ENCODE measurements at regions of chr15 and their contacts with region 1.

Region 1: DNA sequence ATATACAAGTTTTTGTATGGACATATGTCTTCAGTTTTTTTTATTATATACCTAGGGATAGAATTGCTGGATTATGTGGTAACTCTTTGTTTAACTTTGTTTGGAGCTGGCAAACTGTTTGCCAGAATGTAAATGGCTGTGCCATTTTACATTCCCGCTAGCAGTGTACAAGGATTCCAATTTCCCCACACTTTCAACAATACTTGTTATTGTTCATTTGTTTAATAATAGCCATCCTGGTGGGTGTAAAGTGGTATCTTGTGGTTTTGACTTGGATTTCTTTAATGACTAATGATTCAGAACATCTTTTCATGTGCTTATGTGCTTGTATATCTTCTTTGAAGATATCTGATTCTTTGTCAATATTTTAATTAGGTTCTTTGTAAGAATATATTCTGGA is 64.4 kb downstream of the ZNF609 start:
- DNase-seq: no peak
- H3K4me3 ChIP-seq: no peak overlapping the region
- H3K4me3 Mint-ChIP-seq: no peak overlapping the region
- H3K27ac ChIP-seq: no peak overlapping the region
- H3K27ac Mint-ChIP-seq: no peak overlapping the region
- H3K4me1 ChIP-seq: peaks cover 19% of the 10 kb centered on the region
- H3K4me1 Mint-ChIP-seq: peaks cover 49 to 86% (median 66%) of the 10 kb centered on the region in 3 donors
- H3K27me3 ChIP-seq: no peaks in the 10 kb centered on the region
- H3K27me3 Mint-ChIP-seq: no peaks in the 10 kb centered on the region

Region 2: DNA sequence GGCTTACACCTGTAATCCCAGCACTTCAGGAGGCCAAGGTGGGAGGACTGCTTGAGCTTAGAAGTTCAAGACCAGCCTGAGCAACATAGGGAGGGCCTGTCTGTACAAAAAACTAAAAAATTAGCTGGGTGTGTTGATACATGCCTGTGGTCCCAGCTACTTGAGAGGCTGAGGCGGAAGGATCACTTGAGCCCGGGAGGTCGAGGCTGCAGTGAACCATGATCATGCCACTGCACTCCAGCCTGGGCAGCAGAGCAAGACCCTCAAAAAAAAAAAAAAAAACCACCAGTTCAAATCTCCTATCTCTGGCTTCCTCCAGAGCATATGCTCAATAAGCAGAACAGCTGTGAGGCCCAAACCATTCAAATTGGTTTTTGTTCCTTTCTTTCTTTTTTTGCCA is 11.0 kb before region 1 on chr15:
- CTCF ChIA-PET with region 1: no interaction called
- POLR2A ChIA-PET with region 1: interaction called, 10 read pairs
- DNase-seq: no peak
- H3K4me3 ChIP-seq: no peak overlapping the region
- H3K4me3 Mint-ChIP-seq: peak overlapping the region in 1 of 7 donors; percentile 5
- H3K27ac ChIP-seq: no peak overlapping the region
- H3K27ac Mint-ChIP-seq: peak overlapping the region in 6 of 8 donors; percentile 38 to 76 (median 56)
- H3K4me1 ChIP-seq: peaks cover 52% of the 10 kb centered on the region
- H3K4me1 Mint-ChIP-seq: peaks cover 35 to 73% (median 52%) of the 10 kb centered on the region in 3 donors
- H3K27me3 ChIP-seq: no peaks in the 10 kb centered on the region
- H3K27me3 Mint-ChIP-seq: no peaks in the 10 kb centered on the region